Activated CD4-positive, alpha-beta memory T cell treated with anti-CD3 and anti-CD28 coated beads, Interleukin-2, amount 10 ng/mL, durations not matched to agents 7 days and 5 days (primary cell): ENCODE measurements at regions of chr6 and their contacts with region 1.

Region 1: DNA sequence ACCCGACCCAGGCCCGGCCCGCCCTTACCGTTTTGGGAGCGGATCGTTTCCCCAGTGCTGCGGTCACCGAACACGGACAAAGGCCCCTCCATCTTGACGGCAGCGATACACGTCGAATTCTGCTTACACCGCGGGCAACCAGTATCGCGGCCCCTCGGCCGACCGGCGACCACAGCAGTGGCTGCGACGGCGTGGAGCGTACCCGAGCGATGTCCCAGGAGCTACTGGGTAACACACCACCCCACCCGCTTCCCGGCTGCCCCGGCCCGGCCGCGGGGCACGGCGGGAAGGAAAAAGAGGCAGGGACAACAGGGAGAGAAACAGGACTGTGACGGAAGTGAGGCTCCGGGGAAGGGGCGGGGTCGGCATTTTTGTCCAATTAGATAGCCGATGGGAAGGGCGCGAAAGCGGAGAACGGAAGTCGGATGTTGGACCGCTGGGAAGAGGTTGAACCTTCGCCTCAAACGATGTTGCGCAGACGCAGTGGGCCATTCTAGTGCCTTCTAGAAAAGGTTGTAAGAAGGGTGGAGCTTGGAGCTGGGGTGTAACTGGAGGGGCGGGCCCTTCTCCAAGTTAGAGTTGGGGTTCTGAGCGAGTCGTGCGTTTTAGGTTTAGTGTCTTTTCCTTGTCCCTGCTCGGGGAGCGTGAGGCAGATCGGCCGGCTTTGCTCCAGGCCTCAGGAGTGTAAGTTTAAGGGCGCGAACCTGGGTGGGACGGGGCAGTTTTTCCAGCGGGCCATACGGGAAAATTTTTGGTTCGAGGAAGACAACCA is at the start of gene TCP1:
- DNase-seq: peak; percentile 99
- H3K4me3 Mint-ChIP-seq: peak within 1 kb of the TSS; percentile 100
- H3K27ac Mint-ChIP-seq: peak within 1 kb of the TSS; percentile 98
- H3K4me1 Mint-ChIP-seq: peaks cover 64% of the 10 kb centered on the region
- H3K27me3 Mint-ChIP-seq: no peaks in the 10 kb centered on the region
- total RNA-seq, gene TCP1: 203 to 212 TPM

Region 2: DNA sequence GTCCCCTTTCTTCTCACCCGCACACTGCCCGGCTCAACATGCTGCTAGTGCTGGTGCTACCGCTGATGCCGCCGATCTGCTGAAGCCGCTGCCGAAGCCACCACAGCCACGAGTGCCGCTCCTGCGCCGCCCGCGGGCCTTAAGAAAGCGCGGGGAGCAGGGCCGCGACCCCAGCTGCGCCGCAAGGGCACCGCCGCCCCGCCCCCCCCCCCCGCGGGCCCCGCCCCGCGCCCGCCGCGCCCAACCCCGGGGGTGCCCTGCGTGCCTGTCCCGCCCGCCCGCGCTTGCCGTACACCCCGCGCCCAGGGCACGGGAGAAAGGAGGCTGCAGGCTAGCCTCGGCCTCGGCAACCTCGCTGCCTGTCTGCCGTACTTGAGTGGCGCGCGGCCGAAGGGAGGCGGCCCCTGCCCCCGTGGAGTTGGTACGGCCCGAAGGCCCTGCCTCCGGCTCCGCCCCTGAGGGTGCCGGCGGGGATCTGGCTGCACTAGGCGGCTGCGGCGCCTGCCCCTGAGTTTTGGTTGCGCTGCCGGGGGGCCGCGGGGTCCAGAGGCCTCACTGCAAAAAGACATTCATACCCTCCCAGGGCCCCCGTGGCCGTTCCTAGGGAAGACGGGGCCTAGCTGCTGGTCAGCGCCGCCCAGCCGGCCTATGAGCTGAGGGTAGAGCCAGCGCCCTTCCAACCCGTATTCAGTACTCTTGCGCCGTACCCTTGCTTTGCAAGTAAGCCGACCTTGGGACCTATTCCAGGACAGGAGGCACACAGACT is 96.3 kb before region 1 on chr6 and contains the start of gene SOD2:
- CTCF ChIA-PET with region 1: interaction called, 34 read pairs
- POLR2A ChIA-PET with region 1: interaction called, 58 read pairs
- DNase-seq: peak; percentile 85
- H3K4me3 Mint-ChIP-seq: peak within 1 kb of the TSS; percentile 97
- H3K27ac Mint-ChIP-seq: peak within 1 kb of the TSS; percentile 97
- H3K4me1 Mint-ChIP-seq: peaks cover 52% of the 10 kb centered on the region
- H3K27me3 Mint-ChIP-seq: no peaks in the 10 kb centered on the region
- total RNA-seq, gene SOD2: 76.5 to 84.8 TPM

Region 3: GRCh38 chr6:159761873-159762680 is 27.5 kb before region 1 on chr6 and contains the start of gene ACAT2:
- CTCF ChIA-PET with region 1: interaction called, 9 read pairs
- POLR2A ChIA-PET with region 1: interaction called, 88 read pairs
- DNase-seq: peak; percentile 95
- H3K4me3 Mint-ChIP-seq: peak within 1 kb of the TSS; percentile 84
- H3K27ac Mint-ChIP-seq: peak within 1 kb of the TSS; percentile 96
- H3K4me1 Mint-ChIP-seq: peaks cover 44% of the 10 kb centered on the region
- H3K27me3 Mint-ChIP-seq: no peaks in the 10 kb centered on the region
- total RNA-seq, gene ACAT2: 98.0 to 109 TPM

Region 4: DNA sequence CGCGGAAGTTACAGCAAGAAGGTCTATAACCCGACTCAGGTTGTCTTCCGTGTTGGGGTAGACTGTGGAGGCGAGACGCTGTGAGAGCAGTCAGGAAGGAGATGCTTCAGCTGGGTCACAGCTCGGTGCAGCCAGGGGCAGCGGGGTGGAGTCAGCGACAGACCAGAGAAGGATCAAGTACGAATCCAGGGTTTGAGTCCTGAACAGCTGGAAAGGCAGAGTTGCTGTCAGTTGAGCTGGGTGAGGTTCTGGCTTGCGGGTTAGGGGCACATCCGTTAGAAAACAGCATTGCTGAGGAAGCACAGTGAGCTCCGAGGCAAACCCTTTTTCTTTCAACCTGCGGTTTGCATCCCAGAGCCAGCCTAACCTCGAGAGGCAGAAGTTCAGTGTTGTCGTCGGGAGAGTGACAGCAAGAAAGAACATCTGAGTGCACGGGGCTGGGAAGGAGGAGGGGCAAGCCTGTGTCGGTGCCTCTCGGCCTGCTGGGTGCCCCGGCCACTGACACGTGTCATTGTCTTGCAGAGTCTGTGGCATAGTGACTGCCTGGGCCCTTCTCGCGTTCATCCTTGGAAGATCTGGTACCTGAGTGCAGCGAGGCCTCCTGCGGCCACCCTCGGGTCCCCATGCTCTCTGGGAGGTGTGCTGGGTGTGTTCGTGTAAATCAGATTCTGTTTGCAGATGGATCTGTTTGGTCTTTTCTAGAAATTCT is 30.5 kb after region 1 on chr6:
- CTCF ChIA-PET with region 1: interaction called, 4 read pairs
- POLR2A ChIA-PET with region 1: interaction called, 38 read pairs
- DNase-seq: peak; percentile 54
- H3K4me3 Mint-ChIP-seq: peak overlapping the region; percentile 31
- H3K27ac Mint-ChIP-seq: peak overlapping the region; percentile 86
- H3K4me1 Mint-ChIP-seq: peaks cover 16% of the 10 kb centered on the region
- H3K27me3 Mint-ChIP-seq: no peaks in the 10 kb centered on the region

Region 5: DNA sequence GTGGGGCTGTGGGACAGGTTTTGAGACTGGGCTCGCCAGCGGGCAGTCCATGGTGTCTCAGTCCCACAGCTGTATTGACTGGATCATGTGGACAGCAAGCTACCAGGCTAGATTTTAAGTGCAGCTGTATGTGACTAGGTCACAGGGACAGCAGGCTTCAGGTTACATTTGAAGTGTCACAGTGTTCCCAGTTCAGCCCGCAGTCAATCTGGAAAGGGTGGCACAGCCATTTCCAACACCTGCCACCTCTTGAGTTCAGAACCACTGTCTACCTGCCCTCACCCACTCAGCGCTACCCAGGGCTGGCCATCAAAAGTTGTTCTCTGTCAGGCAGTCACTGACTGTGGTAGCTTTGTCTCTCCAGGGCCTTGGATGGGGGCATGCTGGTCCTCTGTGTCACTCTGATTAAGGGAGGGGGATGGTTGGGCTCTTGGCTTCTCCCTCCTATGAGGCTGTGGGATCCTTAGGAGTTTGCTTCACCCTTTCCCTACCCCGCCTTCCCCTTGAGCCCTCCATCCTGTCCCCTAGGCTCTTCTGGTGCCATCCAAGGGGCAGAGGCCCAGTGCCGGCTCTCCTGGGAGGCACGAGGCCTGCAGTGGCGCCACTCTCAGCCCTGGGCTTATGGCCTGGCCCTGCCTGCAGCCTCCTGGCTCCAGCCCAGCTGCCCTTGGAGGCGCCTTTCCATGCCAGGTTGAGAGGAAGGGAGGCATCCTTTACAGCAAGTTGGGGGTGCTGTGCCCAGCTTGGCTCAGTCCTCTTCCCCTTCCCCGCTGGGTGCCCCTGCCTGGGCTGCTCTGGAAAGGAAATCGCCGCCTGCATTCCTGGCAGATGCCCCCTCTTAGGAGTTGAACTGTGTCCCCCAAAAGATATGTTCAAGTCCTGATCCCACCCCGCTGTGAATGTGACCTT is 55.4 kb after region 1 on chr6:
- CTCF ChIA-PET with region 1: no interaction called
- POLR2A ChIA-PET with region 1: no interaction called
- DNase-seq: no peak
- H3K4me3 Mint-ChIP-seq: no peak overlapping the region
- H3K27ac Mint-ChIP-seq: no peak overlapping the region
- H3K4me1 Mint-ChIP-seq: no peaks in the 10 kb centered on the region
- H3K27me3 Mint-ChIP-seq: no peaks in the 10 kb centered on the region

Region 6: DNA sequence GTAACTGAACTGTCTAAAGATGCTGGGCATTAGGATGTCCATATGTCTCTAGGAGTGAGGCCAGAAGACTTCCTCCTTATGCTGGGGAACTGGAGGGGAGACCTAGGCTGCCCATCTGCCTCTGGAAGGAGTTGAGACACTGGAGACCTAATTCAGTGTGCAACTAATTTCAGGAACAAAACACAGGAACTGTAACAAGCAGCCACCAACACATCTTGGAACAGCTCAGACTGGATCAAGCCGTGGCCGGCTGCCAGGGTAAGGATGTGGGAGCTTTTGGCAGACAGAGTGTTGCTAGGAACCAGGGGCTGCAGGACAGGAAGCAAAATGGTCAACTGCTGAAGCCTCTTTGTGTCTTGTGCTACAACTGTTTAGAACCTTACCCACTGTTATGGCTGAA is 84.9 kb after region 1 on chr6:
- CTCF ChIA-PET with region 1: no interaction called
- POLR2A ChIA-PET with region 1: no interaction called
- DNase-seq: no peak
- H3K4me3 Mint-ChIP-seq: no peak overlapping the region
- H3K27ac Mint-ChIP-seq: no peak overlapping the region
- H3K4me1 Mint-ChIP-seq: peaks cover 4% of the 10 kb centered on the region
- H3K27me3 Mint-ChIP-seq: no peaks in the 10 kb centered on the region

Region 7: DNA sequence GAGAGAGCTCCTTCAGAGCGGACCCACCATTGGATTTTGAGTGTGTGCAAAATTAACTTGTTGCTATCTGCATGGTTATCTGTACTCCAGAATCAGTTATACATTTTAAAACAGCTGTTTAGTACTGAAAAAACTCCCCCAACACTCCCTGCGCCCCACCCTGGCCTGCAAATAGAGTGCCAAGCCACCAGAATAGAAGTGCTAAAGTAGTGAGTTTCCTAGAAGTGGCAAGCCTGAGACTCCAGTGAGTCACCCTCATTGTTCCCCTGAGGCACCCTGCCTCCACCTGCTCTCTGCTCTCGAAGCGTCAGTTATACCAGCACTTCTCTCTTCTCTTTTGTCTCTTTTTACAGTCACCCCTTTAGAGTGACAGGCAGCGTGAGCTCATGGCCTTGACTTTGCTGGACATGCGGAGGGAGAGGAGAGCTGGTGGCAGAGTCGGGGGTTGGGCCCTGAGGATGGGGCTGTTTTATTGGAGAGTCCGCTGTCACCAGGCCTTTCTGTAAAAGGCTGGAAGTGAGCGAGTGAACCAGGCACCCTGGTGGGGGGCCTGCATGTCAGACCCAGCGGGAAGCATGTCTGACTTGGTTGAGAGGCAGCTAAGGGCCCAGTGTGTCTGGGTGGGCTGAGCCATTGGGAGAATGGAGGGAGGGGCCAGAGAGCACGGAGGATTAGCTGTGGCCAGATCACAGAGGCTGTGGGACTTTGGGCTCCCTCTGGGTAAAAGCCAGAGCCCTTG is 189.7 kb after region 1 on chr6:
- CTCF ChIA-PET with region 1: interaction called, 6 read pairs
- POLR2A ChIA-PET with region 1: interaction called, 30 read pairs
- DNase-seq: peak; percentile 74
- H3K4me3 Mint-ChIP-seq: peak overlapping the region; percentile 69
- H3K27ac Mint-ChIP-seq: peak overlapping the region; percentile 95
- H3K4me1 Mint-ChIP-seq: peaks cover 95% of the 10 kb centered on the region
- H3K27me3 Mint-ChIP-seq: no peaks in the 10 kb centered on the region